Mammary epithelial cell (primary cell): ENCODE measurements at regions of chr19 and their contacts with region 1.

Region 1: GRCh38 chr19:18683213-18683939 is at the start of gene CRTC1:
- DNase-seq: peak; percentile 75
- H3K4me3 ChIP-seq: peak within 1 kb of the TSS; percentile 87 to 92 (median 89)
- H3K27ac ChIP-seq: peak within 1 kb of the TSS; percentile 28
- H3K4me1 ChIP-seq: peaks cover 14% of the 10 kb centered on the region
- H3K27me3 ChIP-seq: no peaks in the 10 kb centered on the region
- CTCF ChIP-seq: no peak
- total RNA-seq, gene CRTC1: 2.2 to 8.2 TPM

Region 2: DNA sequence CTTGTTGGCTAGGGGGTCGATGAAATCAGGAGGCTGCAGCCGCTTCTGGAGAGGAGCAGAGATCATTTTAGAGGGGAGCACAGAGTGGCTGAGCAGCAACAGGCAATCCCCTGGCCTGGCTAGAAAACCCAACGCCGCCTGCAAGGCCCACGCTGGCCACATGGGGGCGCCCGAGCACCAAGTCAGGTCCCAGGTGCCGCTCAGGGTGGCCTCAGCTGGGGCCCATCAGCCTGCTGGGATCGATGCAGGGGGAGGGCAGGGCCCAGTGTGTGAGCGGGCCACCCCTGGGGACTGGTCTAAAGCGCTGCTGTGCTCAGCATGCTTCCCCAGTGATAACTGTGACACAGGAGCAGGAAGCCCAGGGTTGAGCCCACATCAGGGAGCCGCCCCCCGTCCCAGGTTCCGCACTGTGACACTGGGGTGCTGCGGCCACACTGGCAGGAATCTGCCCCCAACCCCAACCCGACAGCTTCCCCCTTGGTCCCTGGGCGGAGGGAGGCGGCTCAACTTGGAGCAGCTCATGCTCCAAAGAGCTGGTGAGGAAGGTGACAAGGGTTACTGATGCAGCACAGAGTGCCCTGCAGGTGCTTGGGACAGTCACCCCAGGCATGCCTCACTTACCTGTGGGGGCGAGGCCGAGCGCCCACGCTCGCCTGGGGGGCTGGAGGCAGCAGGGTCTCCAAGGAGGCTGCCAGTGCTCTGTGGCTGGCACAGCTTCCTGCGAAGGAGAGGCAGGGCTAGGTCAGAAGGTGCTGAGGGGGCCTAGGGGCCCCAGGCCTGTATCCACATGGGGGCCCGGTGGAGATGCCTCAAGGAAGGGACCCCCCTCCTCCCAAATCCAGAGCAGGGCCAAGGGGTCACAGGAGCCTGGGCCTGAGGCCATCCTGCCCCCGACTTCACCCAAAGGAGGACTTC is 232.2 kb before region 1 on chr19:
- CTCF ChIA-PET with region 1: no interaction called
- dilution Hi-C with region 1: no loop called
- in situ Hi-C with region 1: loop called in 1 of 2 experiments (anchors 25 kb)
- intact Hi-C with region 1: no loop called
- DNase-seq: no peak
- H3K4me3 ChIP-seq: no peak overlapping the region
- H3K27ac ChIP-seq: no peak overlapping the region
- H3K4me1 ChIP-seq: peaks cover 9% of the 10 kb centered on the region
- H3K27me3 ChIP-seq: no peaks in the 10 kb centered on the region
- CTCF ChIP-seq: peak; percentile 92 to 98

Region 3: GRCh38 chr19:18649371-18650020 is 33.9 kb before region 1 on chr19:
- CTCF ChIA-PET with region 1: no interaction called
- dilution Hi-C with region 1: loop called (anchors 5 kb)
- in situ Hi-C with region 1: no loop called
- intact Hi-C with region 1: no loop called
- DNase-seq: peak; percentile 48
- H3K4me3 ChIP-seq: peak overlapping the region in 1 of 3 experiments; percentile 4
- H3K27ac ChIP-seq: no peak overlapping the region
- H3K4me1 ChIP-seq: peaks cover 40% of the 10 kb centered on the region
- H3K27me3 ChIP-seq: no peaks in the 10 kb centered on the region
- CTCF ChIP-seq: no peak

Region 4: DNA sequence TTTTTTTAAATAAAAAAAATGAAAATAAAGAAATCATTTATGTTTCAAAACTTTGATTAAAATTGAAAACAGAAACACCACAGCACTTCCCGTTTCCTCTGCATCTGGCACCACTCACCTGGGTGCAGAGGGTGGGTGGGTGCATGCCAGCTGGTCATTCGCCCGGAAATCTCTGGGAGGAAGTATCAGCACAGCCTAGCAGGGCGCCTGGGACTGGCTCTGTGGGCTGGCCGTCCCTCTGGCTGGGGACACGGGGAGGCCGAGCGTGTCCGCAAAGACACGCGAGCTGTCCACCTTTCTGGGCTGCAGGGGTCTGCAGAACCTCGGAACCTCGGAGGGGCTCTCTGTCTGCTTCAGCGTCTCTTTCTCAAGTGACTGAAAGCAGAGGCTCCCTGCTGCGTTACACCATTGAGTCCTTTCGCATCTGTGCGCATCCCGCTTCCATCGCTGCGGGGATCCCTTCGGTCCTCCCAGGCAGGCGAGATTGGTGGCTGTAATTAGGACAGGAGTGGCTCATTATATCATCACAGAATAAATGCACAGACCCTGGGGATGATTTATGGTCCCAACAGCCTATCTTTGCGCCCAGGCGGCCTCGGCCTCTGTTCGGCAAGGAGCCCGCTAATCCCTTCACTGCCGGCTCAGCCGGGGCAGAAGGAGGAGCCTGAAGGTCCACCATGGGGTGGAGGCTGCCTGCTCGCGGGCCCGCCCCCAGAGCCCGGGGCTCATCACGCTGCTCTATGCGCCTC is 17.3 kb after region 1 on chr19:
- CTCF ChIA-PET with region 1: no interaction called
- dilution Hi-C with region 1: no loop called
- in situ Hi-C with region 1: no loop called
- intact Hi-C with region 1: no loop called
- DNase-seq: peak; percentile 59
- H3K4me3 ChIP-seq: peak overlapping the region; percentile 20 to 34 (median 25)
- H3K27ac ChIP-seq: no peak overlapping the region
- H3K4me1 ChIP-seq: peaks cover 24% of the 10 kb centered on the region
- H3K27me3 ChIP-seq: no peaks in the 10 kb centered on the region
- CTCF ChIP-seq: no peak

Region 5: GRCh38 chr19:18762125-18763023 is 79.0 kb after region 1 on chr19:
- CTCF ChIA-PET with region 1: no interaction called
- dilution Hi-C with region 1: no loop called
- in situ Hi-C with region 1: no loop called
- intact Hi-C with region 1: loop called (anchors 2 kb)
- DNase-seq: peak; percentile 94
- H3K4me3 ChIP-seq: peak overlapping the region; percentile 8 to 49 (median 14)
- H3K27ac ChIP-seq: peak overlapping the region; percentile 38
- H3K4me1 ChIP-seq: peaks cover 47% of the 10 kb centered on the region
- H3K27me3 ChIP-seq: no peaks in the 10 kb centered on the region
- CTCF ChIP-seq: no peak

Region 6: GRCh38 chr19:18831524-18832305 is 148.3 kb after region 1 on chr19 and contains the start of gene UPF1:
- CTCF ChIA-PET with region 1: no interaction called
- dilution Hi-C with region 1: no loop called
- in situ Hi-C with region 1: no loop called
- intact Hi-C with region 1: loop called (anchors 5 kb)
- DNase-seq: peak; percentile 86
- H3K4me3 ChIP-seq: peak within 1 kb of the TSS; percentile 87 to 90 (median 88)
- H3K27ac ChIP-seq: peak within 1 kb of the TSS; percentile 54
- H3K4me1 ChIP-seq: peaks cover 9% of the 10 kb centered on the region
- H3K27me3 ChIP-seq: no peaks in the 10 kb centered on the region
- CTCF ChIP-seq: no peak
- total RNA-seq, gene UPF1: 74.5 to 82.0 TPM